HAP-1 (cell line): ENCODE measurements at regions of chr3 and their contacts with region 1.

Region 1: DNA sequence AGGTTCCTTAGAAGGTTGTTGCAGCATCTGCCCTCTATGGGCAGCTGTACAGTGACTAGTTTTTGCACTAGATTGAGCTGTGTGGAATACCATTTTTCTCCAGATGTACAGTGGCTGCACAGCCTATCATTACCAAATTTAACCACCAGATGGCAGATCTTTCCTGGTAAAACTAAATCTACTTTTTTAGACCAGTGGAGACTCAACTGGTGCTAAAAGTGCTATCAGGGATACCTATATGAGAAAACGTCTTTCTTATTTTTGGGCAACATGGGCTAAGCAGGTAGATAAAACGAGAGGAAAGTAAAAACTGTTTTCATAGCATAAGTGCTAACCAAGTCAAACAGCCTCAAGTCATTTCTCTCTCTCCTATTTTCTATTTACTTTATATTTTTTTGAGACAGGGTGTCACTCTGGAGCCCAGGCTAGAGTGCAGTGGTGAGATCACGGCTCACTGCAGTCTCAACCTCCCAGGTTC is 21.2 kb downstream of the IGSF10 start:
- DNase-seq: peak; percentile 56 to 72
- H3K4me3 ChIP-seq: no peak overlapping the region
- H3K4me1 ChIP-seq: peaks cover under 1% of the 10 kb centered on the region
- H3K27me3 ChIP-seq: no peaks in the 10 kb centered on the region

Region 2: DNA sequence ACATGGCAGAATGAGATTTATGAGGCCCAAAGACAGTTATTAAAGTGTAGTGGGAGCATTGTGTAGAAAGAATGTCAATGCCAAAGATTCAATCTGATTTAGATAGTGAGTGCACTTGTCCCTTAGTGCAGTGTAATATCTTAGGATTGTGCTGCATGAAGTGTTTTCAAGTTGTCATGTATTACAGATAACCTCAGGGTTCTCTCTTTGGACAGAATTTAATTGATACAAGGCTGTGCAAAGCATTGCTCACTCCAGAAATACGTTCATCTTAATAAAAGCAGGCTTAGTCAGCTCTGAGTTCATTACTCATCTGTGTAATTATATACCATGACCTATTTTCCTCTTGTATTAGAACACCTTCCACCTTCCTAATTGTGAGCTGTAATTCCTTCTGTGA is 220.6 kb before region 1 on chr3:
- in situ Hi-C with region 1: no loop called
- DNase-seq: no peak
- H3K4me3 ChIP-seq: no peak overlapping the region
- H3K4me1 ChIP-seq: no peaks in the 10 kb centered on the region
- H3K27me3 ChIP-seq: no peaks in the 10 kb centered on the region

Region 3: DNA sequence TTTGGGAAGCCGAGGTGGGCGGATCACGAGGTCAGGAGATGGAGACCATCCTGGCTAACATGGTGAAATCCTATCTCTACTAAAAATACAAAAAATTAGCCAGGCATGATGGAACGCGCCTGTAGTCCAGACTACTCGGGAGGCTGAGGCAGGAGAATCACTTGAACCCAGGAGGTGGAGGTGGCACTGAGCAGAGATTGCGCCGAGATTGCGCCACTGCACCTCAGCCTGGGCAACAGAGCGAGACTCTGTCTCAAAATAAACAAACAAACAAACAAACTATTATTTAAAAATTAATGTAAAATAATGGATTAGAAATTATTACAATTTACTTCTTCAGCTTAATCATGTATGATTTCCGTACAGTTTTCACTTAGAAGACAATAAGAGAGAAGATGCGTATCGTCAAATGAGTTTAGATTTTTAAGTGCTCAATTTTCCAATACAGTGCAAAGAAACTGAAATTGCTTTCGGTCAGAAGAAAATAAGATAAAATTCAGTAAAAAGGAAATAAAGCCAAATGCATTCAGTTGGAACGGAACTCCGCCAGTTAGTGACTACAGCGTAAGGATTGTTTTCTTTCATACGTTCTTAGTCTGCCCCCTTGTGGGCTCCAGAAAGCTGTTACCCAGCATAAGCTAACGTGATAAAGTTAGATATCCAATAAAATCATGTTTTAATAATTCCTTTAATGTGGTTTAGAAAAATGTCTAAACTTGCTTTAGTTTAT is 399.1 kb after region 1 on chr3:
- in situ Hi-C with region 1: loop called (anchors 10 kb)
- DNase-seq: peak; percentile 67
- H3K4me3 ChIP-seq: no peak overlapping the region
- H3K4me1 ChIP-seq: peaks cover 8% of the 10 kb centered on the region; the same call in 1 of the 2 replicates
- H3K27me3 ChIP-seq: no peaks in the 10 kb centered on the region; the same call in 1 of the 2 replicates